ENCODE measurements at regions of chr9 and their contacts with region 1.

Region 1: DNA sequence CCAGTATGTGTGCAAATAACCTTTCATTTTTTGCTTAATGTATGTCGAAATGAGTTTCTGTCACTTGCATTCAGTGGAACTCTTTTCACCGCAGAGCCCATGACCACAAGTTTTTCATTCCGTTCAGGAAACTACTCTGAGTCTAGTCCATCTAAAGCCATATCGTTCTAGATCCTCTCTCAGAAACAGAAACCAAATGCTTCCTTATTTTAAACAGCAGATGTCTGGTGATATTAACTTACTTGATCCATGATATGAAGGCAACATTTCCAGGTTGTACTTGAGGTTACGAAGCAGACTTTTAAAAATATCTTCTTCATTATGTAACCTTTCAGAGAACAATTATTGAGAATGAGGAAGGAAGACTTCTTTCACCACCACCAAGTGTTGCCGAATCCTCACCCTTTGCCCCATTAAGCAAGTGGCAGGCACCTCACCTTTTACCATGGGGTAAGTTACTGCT is 72.4 kb upstream of the GNAQ start:
- DNase-seq: no peak
- ATAC-seq: no peak
- H3K4me3 ChIP-seq: no peak overlapping the region
- H3K27ac ChIP-seq: no peak overlapping the region
- H3K4me1 ChIP-seq: no peaks in the 10 kb centered on the region
- H3K27me3 ChIP-seq: peaks cover 0 to 8% of the 10 kb centered on the region in 2 experiments; a peak in 1 of 5 replicates
- CTCF ChIP-seq: no peak
- EP300 ChIP-seq: no peak
- POLR2A ChIP-seq: no peak
- RAD21 ChIP-seq: no peak

Region 2: DNA sequence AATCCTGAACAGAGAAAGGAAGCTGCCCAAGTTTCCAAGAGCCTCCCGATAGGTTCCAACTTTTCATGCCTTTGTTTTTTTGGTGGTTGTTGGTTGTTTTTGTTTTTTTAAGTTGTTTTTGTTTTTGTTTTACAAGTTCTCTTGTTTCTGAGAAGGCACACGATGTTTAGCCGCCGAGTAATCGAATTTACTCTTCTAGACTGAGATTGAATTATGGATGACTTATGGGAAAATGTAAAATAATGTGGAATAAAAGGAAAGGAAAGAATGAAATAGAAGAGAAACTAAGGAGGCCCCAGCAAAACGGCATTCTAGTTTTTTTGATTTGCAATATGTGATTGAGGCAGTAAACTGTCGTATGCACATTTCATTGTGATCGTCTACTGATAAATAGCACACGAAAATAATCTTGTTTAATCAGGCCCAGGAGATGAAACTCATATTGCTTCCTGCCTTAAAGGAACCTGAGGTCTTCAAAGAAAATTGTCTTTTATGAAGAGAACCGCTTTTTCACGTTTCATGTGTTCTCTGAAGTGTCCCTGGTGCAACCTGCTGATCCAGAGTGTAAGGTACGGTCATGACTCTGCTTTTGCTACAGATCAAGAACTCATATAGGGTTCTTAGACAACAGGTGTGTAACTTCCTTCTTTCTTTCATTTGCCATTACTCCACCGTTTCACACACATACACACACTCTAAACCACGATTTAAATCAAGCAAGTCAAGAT is 71.1 kb before region 1 on chr9:
- CTCF ChIA-PET with region 1: no interaction called
- POLR2A ChIA-PET with region 1: no interaction called
- in situ Hi-C with region 1: no loop called
- intact Hi-C with region 1: no loop called
- DNase-seq: no peak
- ATAC-seq: no peak
- H3K4me3 ChIP-seq: peak overlapping the region; percentile 87 to 93 (median 89)
- H3K27ac ChIP-seq: peak overlapping the region; percentile 78
- H3K4me1 ChIP-seq: peaks cover 42% of the 10 kb centered on the region
- H3K27me3 ChIP-seq: no peaks in the 10 kb centered on the region
- CTCF ChIP-seq: no peak
- EP300 ChIP-seq: no peak
- POLR2A ChIP-seq: no peak; a peak in 1 of 4 replicates
- RAD21 ChIP-seq: no peak

Region 3: DNA sequence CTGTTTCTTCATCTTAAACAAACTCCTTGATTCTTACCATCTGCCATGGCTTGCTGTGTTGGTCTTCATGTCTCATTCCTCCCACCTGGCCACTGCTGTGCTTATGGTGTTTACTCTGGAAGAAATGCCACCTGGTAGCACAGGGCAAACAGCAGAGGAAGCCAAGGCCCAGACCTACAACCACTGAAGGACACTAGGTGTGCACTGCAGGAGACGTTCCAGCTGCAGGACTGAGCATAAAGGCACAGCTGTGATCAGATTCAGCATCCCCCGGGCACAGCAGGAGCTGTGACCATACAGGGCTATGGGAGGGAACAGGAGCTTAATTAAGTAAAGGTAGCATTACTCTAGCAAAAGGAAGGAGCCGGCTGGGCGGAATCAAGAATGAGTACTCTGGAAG is 59.8 kb before region 1 on chr9:
- CTCF ChIA-PET with region 1: no interaction called
- POLR2A ChIA-PET with region 1: no interaction called
- in situ Hi-C with region 1: loop called (anchors 10 kb)
- intact Hi-C with region 1: no loop called
- DNase-seq: no peak
- ATAC-seq: no peak
- H3K4me3 ChIP-seq: no peak overlapping the region
- H3K27ac ChIP-seq: no peak overlapping the region
- H3K4me1 ChIP-seq: no peaks in the 10 kb centered on the region
- H3K27me3 ChIP-seq: peaks cover 0 to 7% of the 10 kb centered on the region in 2 experiments; a peak in 1 of 5 replicates
- CTCF ChIP-seq: no peak
- EP300 ChIP-seq: no peak
- POLR2A ChIP-seq: no peak
- RAD21 ChIP-seq: no peak

Measured in HepG2 (cell line).